ENCODE measurements at regions of chr11 and their contacts with region 1.

Region 1: DNA sequence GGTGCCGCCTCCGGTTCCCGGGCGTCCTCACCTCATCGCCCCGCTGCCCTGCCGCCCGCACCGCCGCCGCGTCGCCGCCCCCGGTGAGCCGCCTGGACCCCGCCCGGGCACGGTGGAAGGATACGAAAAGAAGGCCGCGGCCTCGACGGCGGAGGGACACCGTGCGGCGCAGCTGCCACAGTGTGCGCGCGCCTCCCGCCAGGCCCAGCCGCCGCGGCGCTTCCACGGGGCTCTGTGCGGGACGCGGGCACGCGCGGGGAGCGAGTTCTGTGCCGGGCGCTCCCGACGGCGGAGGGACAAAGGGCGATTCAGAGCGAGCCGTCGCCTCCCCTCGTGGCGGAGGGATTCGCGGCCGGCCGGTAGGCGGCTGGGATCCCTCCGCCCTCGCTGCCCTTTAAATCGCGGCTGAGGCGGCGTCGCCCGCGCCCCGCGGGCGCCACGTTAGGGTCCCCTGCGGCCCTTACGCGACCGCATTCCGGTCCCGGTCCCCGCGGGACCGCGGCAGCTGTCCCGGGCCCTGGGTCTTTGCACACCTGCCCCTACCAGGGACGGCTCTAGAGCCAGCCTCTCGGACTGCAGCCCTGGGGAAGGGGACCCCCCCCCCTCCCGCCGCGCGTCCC is 569 bp upstream of the KMT5B start:
- DNase-seq: peak; percentile 89

Region 2: DNA sequence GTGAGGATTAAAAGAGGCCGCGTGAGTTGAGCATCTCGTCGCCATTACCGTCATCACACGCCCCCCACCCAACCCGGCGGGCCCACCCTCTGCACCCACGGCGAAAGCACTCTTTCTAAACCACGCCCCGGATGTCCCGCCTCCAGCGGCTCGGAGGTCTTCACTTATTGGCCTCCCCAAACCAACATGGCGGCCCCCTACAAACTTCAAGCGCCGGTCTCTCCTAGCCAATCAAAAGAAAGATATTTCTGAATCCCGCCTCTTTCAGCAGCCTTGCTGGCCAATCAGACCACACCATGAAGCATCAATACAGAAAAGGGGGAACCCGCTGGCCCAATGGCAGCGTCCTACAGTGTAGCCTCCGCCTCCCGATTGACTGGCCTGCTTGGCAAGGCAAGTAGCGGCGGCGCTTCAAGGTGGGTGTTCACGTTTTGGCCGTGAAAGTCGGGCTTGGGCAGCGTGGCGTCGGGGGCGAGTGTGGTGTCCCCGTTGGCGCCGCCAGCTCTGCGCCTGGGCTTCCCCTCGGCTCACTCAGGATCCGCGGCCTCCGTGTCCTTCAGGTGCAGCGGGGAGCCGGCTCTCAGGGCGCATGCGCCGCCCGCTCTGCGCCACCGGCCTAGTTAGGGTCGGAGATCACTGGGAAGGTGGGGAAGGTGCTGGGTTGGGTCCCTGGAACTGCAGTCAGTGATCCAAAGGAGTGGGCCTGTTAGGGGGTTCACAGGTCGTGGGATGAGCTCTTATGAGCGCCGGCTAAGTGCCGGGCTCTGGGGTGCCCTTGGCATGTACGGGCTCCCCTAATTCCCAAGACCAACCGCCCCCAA is 183.1 kb before region 1 on chr11 and contains the start of gene NDUFS8:
- intact Hi-C with region 1: loop called (anchors 5 kb)
- DNase-seq: peak; percentile 96
- total RNA-seq, gene NDUFS8: 315 TPM

Region 3: DNA sequence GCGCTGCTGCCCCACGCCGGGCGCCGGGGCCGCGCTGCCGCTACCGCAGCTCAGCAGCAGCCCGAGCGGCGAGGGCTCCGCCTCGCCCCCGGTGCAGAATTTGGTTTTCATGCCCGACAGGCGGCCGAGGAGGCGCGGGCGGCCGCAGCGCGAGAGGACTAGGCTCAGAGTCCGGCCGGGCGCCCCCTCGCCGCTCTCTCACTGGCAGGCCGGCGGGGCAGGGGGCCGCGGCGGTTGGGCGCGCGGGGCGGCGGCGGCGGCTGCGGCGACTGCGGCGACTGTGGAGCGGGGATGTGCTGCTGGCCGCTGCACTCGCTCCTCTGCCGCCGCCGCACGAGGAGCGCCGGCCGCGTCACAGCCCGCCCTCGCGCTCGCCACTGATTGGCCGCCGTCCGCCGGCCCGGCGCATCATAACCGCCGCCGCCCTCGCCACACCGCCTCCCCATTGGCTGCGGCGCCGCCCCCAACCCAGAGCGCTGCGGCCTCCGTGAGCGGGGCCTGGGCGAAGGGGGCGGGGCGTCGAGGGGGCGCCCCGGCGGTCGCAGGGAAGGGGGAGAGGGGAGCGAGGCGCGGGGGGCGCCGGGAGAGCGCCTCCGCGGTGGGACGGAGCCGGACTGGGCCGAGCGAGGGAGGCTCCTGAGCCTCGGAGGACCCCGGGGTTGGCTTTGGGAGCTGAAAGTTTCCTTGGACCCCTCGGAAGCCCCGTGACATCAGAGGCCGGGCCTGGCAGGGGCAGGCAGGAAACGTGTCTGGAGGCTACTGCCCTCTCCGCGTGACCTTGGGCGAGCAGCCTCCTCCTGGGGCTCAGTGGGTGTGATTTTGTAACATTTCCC is 92.4 kb before region 1 on chr11 and contains the start of gene CHKA:
- intact Hi-C with region 1: loop called (anchors 5 kb)
- DNase-seq: peak; percentile 96
- total RNA-seq, gene CHKA: 10.2 TPM

Region 4: GRCh38 chr11:68825571-68825970 is 611.9 kb after region 1 on chr11:
- intact Hi-C with region 1: no loop called
- DNase-seq: no peak

Measured in cardiac septum (tissue), 1 donor.